Lower leg skin (tissue), 4 donors: ENCODE measurements at regions of chr18 and their contacts with region 1.

Region 1: DNA sequence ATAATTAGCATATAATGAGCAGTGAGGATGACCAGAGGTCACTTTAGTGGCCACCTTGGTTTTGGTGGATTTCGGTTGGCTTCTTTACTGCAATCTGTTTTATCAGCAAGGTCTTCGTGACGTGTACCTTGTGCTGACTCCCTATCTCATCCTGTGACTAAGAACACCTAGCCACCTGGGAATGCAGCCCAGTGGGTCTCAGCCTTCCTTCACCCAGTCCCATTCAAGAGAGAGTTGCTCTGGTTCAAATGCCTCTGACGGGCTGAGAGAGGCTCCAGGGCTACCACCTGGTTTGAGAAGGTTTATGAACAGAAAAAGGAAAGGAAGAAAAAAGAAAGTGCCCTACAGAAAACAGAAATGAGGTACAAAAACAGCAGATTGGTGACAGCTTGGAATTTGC is 738.7 kb downstream of the SOCS6 start:
- DNase-seq: no peak
- H3K4me3 ChIP-seq: no peak overlapping the region
- CTCF ChIP-seq: no peak
- POLR2A ChIP-seq: no peak

Region 2: GRCh38 chr18:70966419-70966818 is 61.1 kb before region 1 on chr18:
- intact Hi-C with region 1: loop called (anchors 2 kb)
- DNase-seq: no peak
- H3K4me3 ChIP-seq: no peak overlapping the region
- CTCF ChIP-seq: no peak
- POLR2A ChIP-seq: no peak

Region 3: DNA sequence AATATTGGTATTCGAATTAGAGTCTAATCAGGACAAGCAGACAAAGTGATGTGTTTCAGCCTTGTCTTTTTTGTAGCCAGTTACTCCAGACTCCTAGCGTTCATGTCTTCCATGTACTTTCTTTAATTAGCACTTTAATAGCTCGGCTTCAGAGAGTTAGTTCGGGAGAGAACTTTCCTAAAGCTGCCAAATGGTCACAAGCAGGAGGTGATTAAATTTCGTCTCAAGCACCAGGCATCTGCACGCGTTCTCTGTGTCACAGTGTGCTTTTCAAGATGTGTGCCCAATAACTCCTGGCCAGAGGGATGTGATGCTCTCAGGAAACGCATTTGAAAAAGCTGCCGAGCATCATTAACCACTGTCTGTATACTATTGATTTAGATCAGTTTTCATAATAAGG is 52.1 kb after region 1 on chr18:
- intact Hi-C with region 1: no loop called
- DNase-seq: no peak
- H3K4me3 ChIP-seq: no peak overlapping the region
- CTCF ChIP-seq: no peak
- POLR2A ChIP-seq: no peak